GM18951 (cell line): ENCODE measurements at regions of chr10 and their contacts with region 1.

Region 1: DNA sequence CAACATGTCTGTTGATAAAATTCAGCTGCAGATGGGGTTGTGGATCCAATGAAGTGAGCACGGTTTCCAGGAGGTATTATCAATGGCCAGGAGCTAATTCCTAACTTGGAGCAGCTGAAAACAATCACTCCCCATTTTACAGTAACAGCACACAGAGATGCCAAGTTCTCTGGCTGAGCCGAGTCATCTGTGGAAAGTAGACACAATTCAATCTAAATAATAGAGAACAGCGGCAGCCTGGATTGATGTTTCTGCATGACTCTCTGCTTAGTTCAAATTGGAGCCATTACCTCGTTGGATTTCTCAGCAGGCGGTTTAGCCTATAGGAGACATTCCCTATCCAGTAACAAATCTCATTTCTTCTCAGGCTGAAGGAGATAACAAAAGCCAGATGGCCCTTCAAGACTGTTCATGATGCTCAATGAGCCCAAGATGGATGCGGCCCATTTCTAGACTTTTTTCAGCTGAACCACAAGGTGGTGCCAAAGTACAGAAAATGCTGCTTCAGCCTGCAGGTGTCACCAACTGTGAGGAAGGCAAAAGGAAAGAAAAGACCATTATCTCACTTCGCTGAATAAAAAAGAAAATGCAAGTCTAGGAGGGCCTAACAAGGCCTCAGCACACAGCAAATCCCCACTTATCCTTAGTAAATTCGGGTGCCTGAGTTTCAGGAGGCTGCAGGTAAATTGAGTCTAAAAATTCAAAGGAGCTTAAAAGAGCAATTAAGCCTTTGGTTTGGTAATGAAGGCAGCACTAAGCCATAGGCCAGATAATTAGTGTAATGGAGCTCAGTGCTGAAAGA is 83.7 kb downstream of the SLC16A9 start:
- POLR2A ChIP-seq: no peak

Region 2: GRCh38 chr10:59190332-59190731 is 435.6 kb before region 1 on chr10:
- in situ Hi-C with region 1: no loop called
- POLR2A ChIP-seq: no peak

Region 3: DNA sequence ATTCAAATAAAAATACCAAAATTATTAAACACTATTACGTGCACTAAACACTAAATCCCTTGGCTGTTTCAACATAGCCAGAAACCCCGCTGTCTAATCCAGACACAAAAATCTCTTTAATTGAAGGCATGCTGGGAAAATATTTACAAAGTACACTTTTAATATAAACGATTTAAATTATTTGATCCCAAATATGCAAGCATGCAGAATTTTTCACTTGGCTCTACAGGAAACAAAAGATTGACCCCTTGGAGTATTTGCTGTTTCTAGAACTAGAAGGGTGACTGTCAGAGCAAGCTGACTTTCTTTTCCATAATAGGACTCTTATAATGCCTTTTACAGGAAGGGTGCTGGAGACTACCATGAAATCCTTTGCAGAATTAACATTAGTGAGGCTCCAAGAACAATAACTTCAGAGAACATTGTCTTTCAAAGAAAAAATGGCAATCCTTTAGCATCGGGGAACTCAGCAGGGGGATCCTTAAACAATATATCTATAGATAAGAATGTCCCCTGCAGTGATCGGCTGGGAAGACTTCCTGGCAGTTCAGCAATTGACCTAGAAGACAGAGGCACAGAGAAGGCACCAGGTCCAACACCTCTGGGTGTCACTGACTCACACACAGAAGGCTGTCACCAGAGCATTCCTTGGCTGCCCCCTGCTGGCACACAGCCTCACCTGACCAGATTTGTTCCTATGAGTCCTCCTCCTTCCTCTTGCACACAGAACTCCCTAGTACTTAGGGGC is 183.1 kb after region 1 on chr10:
- in situ Hi-C with region 1: loop called (anchors 5 kb)
- POLR2A ChIP-seq: no peak

Region 4: GRCh38 chr10:60434418-60435046 is 808.6 kb after region 1 on chr10:
- in situ Hi-C with region 1: loop called (anchors 10 kb)
- POLR2A ChIP-seq: no peak